Sigmoid colon (tissue), 7 donors: ENCODE measurements at regions of chr18 and their contacts with region 1.

Region 1: DNA sequence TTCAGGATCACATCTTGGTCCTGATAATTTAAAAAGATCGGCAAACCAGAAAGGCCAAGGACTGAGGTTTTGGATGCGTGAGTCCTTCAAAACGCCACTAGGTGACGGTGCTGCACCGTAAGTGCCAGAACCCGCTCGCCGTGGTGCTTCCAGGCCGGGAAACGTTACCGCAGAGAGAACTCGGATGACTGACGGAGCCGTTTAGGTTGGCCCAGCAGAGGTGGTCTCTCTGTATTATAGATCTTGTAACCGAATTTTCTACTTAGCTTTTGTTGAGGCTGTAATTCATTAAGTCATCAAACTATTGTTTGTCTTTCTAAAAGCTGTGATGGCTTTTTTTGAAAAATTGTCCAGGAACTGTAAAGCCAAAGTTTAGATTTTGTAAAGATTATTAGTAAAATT is 39.8 kb upstream of the ADCYAP1 start:
- DNase-seq: peak; percentile 81
- H3K4me3 ChIP-seq: no peak overlapping the region
- H3K27ac ChIP-seq: no peak overlapping the region
- H3K4me1 ChIP-seq: no peaks in the 10 kb centered on the region
- H3K27me3 ChIP-seq: peaks cover 0 to 4% (median 0%) of the 10 kb centered on the region in 3 donors
- CTCF ChIP-seq: peak; percentile 46 to 96 (median 84)
- EP300 ChIP-seq: no peak
- POLR2A ChIP-seq: no peak

Region 2: GRCh38 chr18:961644-962355 is 96.9 kb after region 1 on chr18:
- intact Hi-C with region 1: loop called (anchors 10 kb)
- DNase-seq: no peak
- H3K4me3 ChIP-seq: peak overlapping the region in 3 of 4 donors; percentile 20 to 32 (median 27)
- H3K27ac ChIP-seq: no peak overlapping the region
- H3K4me1 ChIP-seq: peaks cover 0 to 7% (median 2%) of the 10 kb centered on the region in 4 donors
- H3K27me3 ChIP-seq: no peaks in the 10 kb centered on the region
- CTCF ChIP-seq: peak in 3 of 4 experiments; percentile 62 to 88 (median 75)
- EP300 ChIP-seq: no peak
- POLR2A ChIP-seq: no peak

Region 3: DNA sequence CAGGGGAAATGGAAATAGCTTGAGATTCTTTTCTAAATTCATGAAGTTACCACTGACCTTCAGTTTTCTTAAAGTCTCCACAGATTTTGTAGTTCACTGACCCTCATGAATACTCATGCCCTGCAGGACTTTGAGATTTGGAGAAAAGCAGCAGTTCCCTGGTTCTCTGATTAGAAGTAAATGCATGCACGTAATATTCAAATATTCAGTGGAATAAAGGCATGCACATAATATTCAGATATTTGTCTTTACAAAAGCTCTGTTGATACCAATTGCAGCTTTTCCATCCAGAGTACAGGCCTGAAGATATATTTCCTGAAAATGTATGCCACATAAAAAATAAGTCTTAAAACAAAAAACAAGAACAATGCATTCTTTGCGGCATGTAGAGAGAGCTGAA is 259.6 kb after region 1 on chr18:
- intact Hi-C with region 1: no loop called
- DNase-seq: no peak
- H3K4me3 ChIP-seq: no peak overlapping the region
- H3K27ac ChIP-seq: no peak overlapping the region
- H3K4me1 ChIP-seq: no peaks in the 10 kb centered on the region
- H3K27me3 ChIP-seq: no peaks in the 10 kb centered on the region
- CTCF ChIP-seq: no peak
- EP300 ChIP-seq: no peak
- POLR2A ChIP-seq: no peak

Region 4: GRCh38 chr18:1147730-1148129 is 282.9 kb after region 1 on chr18:
- intact Hi-C with region 1: no loop called
- DNase-seq: no peak
- H3K4me3 ChIP-seq: no peak overlapping the region
- H3K27ac ChIP-seq: no peak overlapping the region
- H3K4me1 ChIP-seq: no peaks in the 10 kb centered on the region
- H3K27me3 ChIP-seq: no peaks in the 10 kb centered on the region
- CTCF ChIP-seq: no peak
- EP300 ChIP-seq: no peak
- POLR2A ChIP-seq: no peak